Heart left ventricle (tissue), 16 donors: ENCODE measurements at regions of chr3 and their contacts with region 1.

Region 1: GRCh38 chr3:71478568-71478967 is 105.0 kb downstream of the FOXP1 start:
- DNase-seq: no peak
- ATAC-seq: no peak
- H3K4me3 ChIP-seq: no peak overlapping the region
- H3K27ac ChIP-seq: no peak overlapping the region
- H3K4me1 ChIP-seq: peaks cover 0 to 9% (median 0%) of the 10 kb centered on the region in 12 donors
- H3K27me3 ChIP-seq: no peaks in the 10 kb centered on the region
- CTCF ChIP-seq: no peak
- POLR2A ChIP-seq: no peak

Region 2: DNA sequence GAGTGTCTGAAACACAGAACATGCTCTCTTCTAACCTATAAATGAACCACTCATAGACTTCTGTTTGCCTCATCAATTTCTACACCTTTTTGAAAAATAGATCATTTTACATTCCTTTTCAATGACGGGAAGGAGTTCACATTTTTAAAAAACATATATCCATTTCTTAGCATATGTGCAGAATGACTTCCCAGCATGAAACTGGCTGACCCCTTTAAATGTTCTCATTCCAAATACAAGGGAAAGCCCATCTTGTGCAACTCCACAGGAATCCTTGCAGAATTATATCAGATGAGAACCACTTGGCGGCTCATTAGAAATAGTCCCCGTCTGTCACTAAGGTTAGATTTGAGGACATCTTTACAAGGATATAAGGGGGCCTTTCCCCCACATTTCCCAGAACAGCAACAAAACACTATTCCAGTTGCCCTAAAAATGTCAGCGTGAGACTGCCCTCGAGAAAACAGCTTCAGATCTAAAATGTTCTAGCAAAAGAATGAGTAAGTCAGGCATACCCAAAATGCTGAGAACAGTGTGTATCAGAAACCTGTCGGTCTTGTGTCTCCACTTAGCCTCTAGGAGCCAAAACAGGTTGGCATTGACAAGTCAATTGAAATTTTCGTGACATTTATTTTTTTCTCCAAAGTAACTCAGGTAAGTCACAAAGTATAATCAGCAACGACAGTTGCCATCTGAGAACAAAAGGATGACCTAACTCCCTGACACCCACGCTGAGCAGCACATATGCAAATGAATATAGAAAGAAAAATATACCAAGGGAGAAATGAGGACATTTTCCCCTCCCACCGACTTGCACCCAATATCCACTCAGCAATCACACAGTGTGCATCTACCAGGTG is 41.8 kb after region 1 on chr3:
- intact Hi-C with region 1: loop called in 1 of 10 experiments (anchors 5 kb)
- DNase-seq: no peak
- ATAC-seq: no peak
- H3K4me3 ChIP-seq: no peak overlapping the region
- H3K27ac ChIP-seq: no peak overlapping the region
- H3K4me1 ChIP-seq: peaks cover 0 to 28% (median 15%) of the 10 kb centered on the region in 12 donors
- H3K27me3 ChIP-seq: no peaks in the 10 kb centered on the region
- CTCF ChIP-seq: no peak
- POLR2A ChIP-seq: no peak

Region 3: DNA sequence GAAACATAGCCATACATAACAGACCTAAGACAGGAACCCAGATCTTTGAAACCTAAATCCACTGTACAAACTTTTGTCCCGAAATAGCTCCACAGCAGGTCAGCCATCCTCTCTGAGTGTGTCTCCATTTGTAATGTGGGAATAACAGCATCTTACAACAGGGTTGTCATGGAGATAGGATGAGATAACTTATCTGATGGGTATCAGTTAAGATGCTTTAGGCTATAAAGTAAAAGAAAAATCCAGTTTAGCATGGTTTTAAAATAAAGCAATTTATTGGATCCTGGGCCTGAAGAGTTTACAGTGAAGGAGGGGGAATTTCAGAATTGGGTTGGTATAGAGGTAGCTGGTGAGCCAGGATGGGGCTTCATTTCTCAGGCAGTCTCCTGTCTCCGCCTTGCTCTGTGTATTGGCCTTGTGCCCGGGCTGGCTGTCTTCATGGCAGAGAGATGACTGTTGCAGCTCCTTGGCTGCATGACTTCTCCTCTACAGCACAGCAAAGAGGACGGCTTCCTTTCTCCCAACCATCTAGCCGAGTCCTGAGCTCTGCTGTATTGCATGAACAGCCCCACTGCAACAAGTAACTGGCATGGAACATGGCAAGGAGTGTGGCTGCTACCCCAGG is 438.3 kb after region 1 on chr3:
- intact Hi-C with region 1: no loop called
- DNase-seq: no peak
- ATAC-seq: no peak
- H3K4me3 ChIP-seq: no peak overlapping the region
- H3K27ac ChIP-seq: no peak overlapping the region
- H3K4me1 ChIP-seq: peaks cover 0 to 7% (median 0%) of the 10 kb centered on the region in 12 donors
- H3K27me3 ChIP-seq: peaks cover 0 to 61% (median 0%) of the 10 kb centered on the region in 9 donors
- CTCF ChIP-seq: no peak
- POLR2A ChIP-seq: no peak